Ovary (tissue), 10 donors: ENCODE measurements at regions of chr21 and their contacts with region 1.

Region 1: GRCh38 chr21:26982767-26983166 is 15.9 kb upstream of the ADAMTS5 start:
- DNase-seq: peak in 2 of 5 donors; percentile 19 to 29
- H3K4me3 ChIP-seq: no peak overlapping the region
- H3K27ac ChIP-seq: no peak overlapping the region
- H3K4me1 ChIP-seq: no peaks in the 10 kb centered on the region
- H3K27me3 ChIP-seq: no peaks in the 10 kb centered on the region
- CTCF ChIP-seq: no peak
- EP300 ChIP-seq: no peak
- POLR2A ChIP-seq: no peak

Region 2: GRCh38 chr21:26057477-26058170 is 925.1 kb before region 1 on chr21:
- intact Hi-C with region 1: no loop called
- DNase-seq: no peak
- H3K4me3 ChIP-seq: no peak overlapping the region
- H3K27ac ChIP-seq: no peak overlapping the region
- H3K4me1 ChIP-seq: peaks cover 10% of the 10 kb centered on the region
- H3K27me3 ChIP-seq: no peaks in the 10 kb centered on the region
- CTCF ChIP-seq: no peak
- EP300 ChIP-seq: no peak
- POLR2A ChIP-seq: no peak

Region 3: DNA sequence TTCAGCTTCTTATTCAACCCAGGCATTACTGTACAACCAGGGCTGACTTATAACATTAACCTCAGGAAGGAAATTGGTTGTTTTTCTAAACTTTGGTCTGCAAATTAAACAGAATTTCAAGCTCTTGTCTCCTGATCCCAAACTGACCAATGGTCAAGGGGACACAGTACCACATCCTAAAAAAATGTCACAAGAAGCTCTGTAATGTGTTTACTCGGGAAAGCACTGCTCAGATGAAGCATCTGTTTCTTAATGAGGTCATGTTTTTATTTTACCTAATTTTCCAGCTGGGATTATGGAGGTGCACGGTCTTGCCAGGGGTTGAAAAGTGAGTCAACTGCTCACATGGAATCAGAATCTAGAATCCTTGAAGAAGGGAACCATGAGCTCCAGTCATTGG is 34.6 kb before region 1 on chr21:
- intact Hi-C with region 1: loop called in 1 of 4 experiments (anchors 2 kb)
- DNase-seq: no peak
- H3K4me3 ChIP-seq: no peak overlapping the region
- H3K27ac ChIP-seq: peak overlapping the region in 1 of 2 donors; percentile 29
- H3K4me1 ChIP-seq: peaks cover 7% of the 10 kb centered on the region
- H3K27me3 ChIP-seq: no peaks in the 10 kb centered on the region
- CTCF ChIP-seq: no peak
- EP300 ChIP-seq: no peak
- POLR2A ChIP-seq: no peak

Region 4: GRCh38 chr21:27275294-27275927 is 292.6 kb after region 1 on chr21:
- intact Hi-C with region 1: no loop called
- DNase-seq: no peak
- H3K4me3 ChIP-seq: no peak overlapping the region
- H3K27ac ChIP-seq: peak overlapping the region in 1 of 2 donors; percentile 36
- H3K4me1 ChIP-seq: peaks cover 6% of the 10 kb centered on the region
- H3K27me3 ChIP-seq: no peaks in the 10 kb centered on the region
- CTCF ChIP-seq: no peak
- EP300 ChIP-seq: no peak
- POLR2A ChIP-seq: no peak